CD8-positive, alpha-beta T cell (primary cell): ENCODE measurements at regions of chr17 and their contacts with region 1.

Region 1: GRCh38 chr17:19362277-19363113 is at the start of gene B9D1:
- DNase-seq: peak; percentile 91 to 98 (median 94)
- ATAC-seq: peak; percentile 92
- H3K4me3 ChIP-seq: peak within 1 kb of the TSS; percentile 81 to 89
- H3K4me3 Mint-ChIP-seq: peak within 1 kb of the TSS; percentile 92
- H3K27ac ChIP-seq: peak within 1 kb of the TSS; percentile 55 to 61
- H3K27ac Mint-ChIP-seq: peak within 1 kb of the TSS; percentile 90
- H3K4me1 ChIP-seq: peaks cover 11% of the 10 kb centered on the region
- H3K4me1 Mint-ChIP-seq: peaks cover 9% of the 10 kb centered on the region
- H3K27me3 ChIP-seq: no peaks in the 10 kb centered on the region
- H3K27me3 Mint-ChIP-seq: peaks cover 7% of the 10 kb centered on the region
- CTCF ChIP-seq: peak; percentile 98
- total RNA-seq, gene B9D1: 0.72 to 0.92 TPM

Region 2: GRCh38 chr17:19302791-19303331 is 59.6 kb before region 1 on chr17:
- CTCF ChIA-PET with region 1: no interaction called
- POLR2A ChIA-PET with region 1: no interaction called
- intact Hi-C with region 1: no loop called
- DNase-seq: peak in 1 of 9 experiments; percentile 18
- ATAC-seq: no peak
- H3K4me3 ChIP-seq: no peak overlapping the region
- H3K4me3 Mint-ChIP-seq: no peak overlapping the region
- H3K27ac ChIP-seq: no peak overlapping the region
- H3K27ac Mint-ChIP-seq: no peak overlapping the region
- H3K4me1 ChIP-seq: peaks cover 22% of the 10 kb centered on the region
- H3K4me1 Mint-ChIP-seq: peaks cover 24% of the 10 kb centered on the region
- H3K27me3 ChIP-seq: no peaks in the 10 kb centered on the region
- H3K27me3 Mint-ChIP-seq: peaks cover 25% of the 10 kb centered on the region
- CTCF ChIP-seq: no peak

Region 3: GRCh38 chr17:19377602-19378392 is 15.3 kb after region 1 on chr17:
- CTCF ChIA-PET with region 1: interaction called, 37 read pairs
- POLR2A ChIA-PET with region 1: interaction called, 20 read pairs
- intact Hi-C with region 1: loop called (anchors 1 kb)
- DNase-seq: peak; percentile 82 to 98 (median 93)
- ATAC-seq: peak; percentile 89
- H3K4me3 ChIP-seq: peak overlapping the region; percentile 81 to 96
- H3K4me3 Mint-ChIP-seq: peak overlapping the region; percentile 100
- H3K27ac ChIP-seq: peak overlapping the region; percentile 81 to 86
- H3K27ac Mint-ChIP-seq: peak overlapping the region; percentile 96
- H3K4me1 ChIP-seq: peaks cover 6% of the 10 kb centered on the region
- H3K4me1 Mint-ChIP-seq: peaks cover 15% of the 10 kb centered on the region
- H3K27me3 ChIP-seq: no peaks in the 10 kb centered on the region
- H3K27me3 Mint-ChIP-seq: no peaks in the 10 kb centered on the region
- CTCF ChIP-seq: no peak

Region 4: DNA sequence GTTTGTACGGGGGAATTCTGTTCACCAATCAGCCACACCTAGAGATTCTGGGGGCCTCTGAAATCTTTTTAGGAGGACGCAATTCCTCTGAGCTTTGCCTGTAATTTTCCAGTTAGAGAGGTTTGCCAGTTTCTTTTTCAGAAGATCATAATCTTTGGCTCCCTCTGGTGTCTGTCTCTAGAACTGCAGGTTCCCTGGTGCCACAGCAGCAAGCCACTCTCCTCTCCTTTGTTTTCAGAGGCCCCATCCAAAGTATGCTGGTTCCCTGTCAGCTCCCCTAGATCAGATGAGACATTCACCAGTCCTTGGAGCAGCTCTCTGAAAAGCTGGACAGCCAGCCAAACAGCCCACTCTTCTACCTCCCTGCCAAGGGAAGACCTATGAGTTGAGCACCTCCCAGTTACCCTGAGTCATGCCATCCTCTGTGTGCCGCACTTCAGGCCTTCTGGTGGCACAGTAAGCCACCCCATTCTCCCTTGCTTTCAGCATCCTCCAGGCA is 84.6 kb after region 1 on chr17:
- CTCF ChIA-PET with region 1: interaction called, 215 read pairs
- POLR2A ChIA-PET with region 1: interaction called, 8 read pairs
- intact Hi-C with region 1: loop called (anchors 1 kb)
- DNase-seq: peak; percentile 36 to 79 (median 70)
- ATAC-seq: peak; percentile 80
- H3K4me3 ChIP-seq: no peak overlapping the region
- H3K4me3 Mint-ChIP-seq: no peak overlapping the region
- H3K27ac ChIP-seq: no peak overlapping the region
- H3K27ac Mint-ChIP-seq: no peak overlapping the region
- H3K4me1 ChIP-seq: no peaks in the 10 kb centered on the region
- H3K4me1 Mint-ChIP-seq: no peaks in the 10 kb centered on the region
- H3K27me3 ChIP-seq: no peaks in the 10 kb centered on the region
- H3K27me3 Mint-ChIP-seq: peaks cover 24% of the 10 kb centered on the region
- CTCF ChIP-seq: peak; percentile 92

Region 5: GRCh38 chr17:19507775-19508576 is 145.5 kb after region 1 on chr17:
- CTCF ChIA-PET with region 1: interaction called, 5 read pairs
- POLR2A ChIA-PET with region 1: no interaction called
- intact Hi-C with region 1: loop called (anchors 1 kb)
- DNase-seq: peak; percentile 79 to 95 (median 87)
- ATAC-seq: peak; percentile 73
- H3K4me3 ChIP-seq: peak overlapping the region; percentile 73 to 78
- H3K4me3 Mint-ChIP-seq: peak overlapping the region; percentile 87
- H3K27ac ChIP-seq: peak overlapping the region; percentile 19 to 62
- H3K27ac Mint-ChIP-seq: peak overlapping the region; percentile 98
- H3K4me1 ChIP-seq: peaks cover 7% of the 10 kb centered on the region
- H3K4me1 Mint-ChIP-seq: peaks cover 7% of the 10 kb centered on the region
- H3K27me3 ChIP-seq: no peaks in the 10 kb centered on the region
- H3K27me3 Mint-ChIP-seq: no peaks in the 10 kb centered on the region
- CTCF ChIP-seq: no peak

Region 6: GRCh38 chr17:19648475-19649406 is 286.2 kb after region 1 on chr17 and contains the start of gene ALDH3A2:
- CTCF ChIA-PET with region 1: interaction called, 6 read pairs
- POLR2A ChIA-PET with region 1: no interaction called
- intact Hi-C with region 1: loop called in 1 of 2 experiments (anchors 5 kb)
- DNase-seq: peak; percentile 81 to 95 (median 92)
- ATAC-seq: peak; percentile 91
- H3K4me3 ChIP-seq: peak within 1 kb of the TSS; percentile 82 to 94
- H3K4me3 Mint-ChIP-seq: peak within 1 kb of the TSS; percentile 96
- H3K27ac ChIP-seq: peak within 1 kb of the TSS; percentile 57 to 69
- H3K27ac Mint-ChIP-seq: peak within 1 kb of the TSS; percentile 96
- H3K4me1 ChIP-seq: peaks cover 21% of the 10 kb centered on the region
- H3K4me1 Mint-ChIP-seq: peaks cover 43% of the 10 kb centered on the region
- H3K27me3 ChIP-seq: no peaks in the 10 kb centered on the region
- H3K27me3 Mint-ChIP-seq: no peaks in the 10 kb centered on the region
- CTCF ChIP-seq: no peak
- total RNA-seq, gene ALDH3A2: 14.9 to 16.6 TPM

Region 7: GRCh38 chr17:19977311-19978208 is 615.1 kb after region 1 on chr17 and contains the start of gene AKAP10:
- CTCF ChIA-PET with region 1: no interaction called
- POLR2A ChIA-PET with region 1: no interaction called
- intact Hi-C with region 1: loop called in 1 of 2 experiments (anchors 10 kb)
- DNase-seq: peak; percentile 87 to 95 (median 93)
- ATAC-seq: peak; percentile 84
- H3K4me3 ChIP-seq: peak within 1 kb of the TSS; percentile 67 to 89
- H3K4me3 Mint-ChIP-seq: peak within 1 kb of the TSS; percentile 94
- H3K27ac ChIP-seq: peak within 1 kb of the TSS; percentile 76 to 95
- H3K27ac Mint-ChIP-seq: peak within 1 kb of the TSS; percentile 95
- H3K4me1 ChIP-seq: peaks cover 29% of the 10 kb centered on the region
- H3K4me1 Mint-ChIP-seq: peaks cover 53% of the 10 kb centered on the region
- H3K27me3 ChIP-seq: no peaks in the 10 kb centered on the region
- H3K27me3 Mint-ChIP-seq: no peaks in the 10 kb centered on the region
- CTCF ChIP-seq: no peak
- total RNA-seq, gene AKAP10: 21.5 to 29.6 TPM

Region 8: GRCh38 chr17:20155258-20156195 is 793.0 kb after region 1 on chr17:
- CTCF ChIA-PET with region 1: no interaction called
- POLR2A ChIA-PET with region 1: no interaction called
- intact Hi-C with region 1: loop called in 1 of 2 experiments (anchors 10 kb)
- DNase-seq: peak; percentile 87 to 98 (median 95)
- ATAC-seq: peak; percentile 98
- H3K4me3 ChIP-seq: peak overlapping the region; percentile 48 to 70
- H3K4me3 Mint-ChIP-seq: no peak overlapping the region
- H3K27ac ChIP-seq: peak overlapping the region; percentile 21 to 47
- H3K27ac Mint-ChIP-seq: no peak overlapping the region
- H3K4me1 ChIP-seq: peaks cover 16% of the 10 kb centered on the region
- H3K4me1 Mint-ChIP-seq: peaks cover 3% of the 10 kb centered on the region
- H3K27me3 ChIP-seq: no peaks in the 10 kb centered on the region
- H3K27me3 Mint-ChIP-seq: no peaks in the 10 kb centered on the region
- CTCF ChIP-seq: no peak